Activated CD4-positive, alpha-beta T cell treated with anti-CD3 and anti-CD28 coated beads, Interleukin-2, amount 10 ng/mL, durations not matched to agents 7 days and 5 days (primary cell): ENCODE measurements at regions of chr2 and their contacts with region 1.

Region 1: DNA sequence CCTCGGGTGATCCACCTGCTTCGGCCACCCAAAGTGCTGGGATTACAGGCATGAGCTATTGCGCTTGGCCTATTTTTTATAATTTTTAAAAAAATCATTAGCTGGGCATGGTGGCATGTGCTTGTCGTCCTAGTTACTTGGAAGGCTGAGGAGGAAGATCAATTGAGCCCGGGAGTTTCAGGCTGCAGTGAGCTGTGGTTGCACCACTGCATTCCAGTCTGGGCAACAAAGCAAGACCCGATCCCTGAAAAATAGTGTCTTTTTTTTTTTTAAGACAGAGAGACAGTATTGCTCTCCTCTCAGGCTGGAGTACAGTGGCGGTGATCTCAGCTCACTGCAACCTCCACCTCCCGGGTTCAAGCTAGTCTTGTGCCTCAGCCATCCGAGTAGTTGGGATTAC is 4.8 kb downstream of the SSB start:
- DNase-seq: no peak
- H3K4me3 Mint-ChIP-seq: no peak overlapping the region
- H3K27ac Mint-ChIP-seq: no peak overlapping the region
- H3K4me1 Mint-ChIP-seq: peaks cover 29% of the 10 kb centered on the region
- H3K27me3 Mint-ChIP-seq: no peaks in the 10 kb centered on the region

Region 2: GRCh38 chr2:169815849-169816248 is 12.4 kb after region 1 on chr2:
- CTCF ChIA-PET with region 1: interaction called, 10 read pairs
- POLR2A ChIA-PET with region 1: no interaction called
- DNase-seq: no peak
- H3K4me3 Mint-ChIP-seq: no peak overlapping the region
- H3K27ac Mint-ChIP-seq: no peak overlapping the region
- H3K4me1 Mint-ChIP-seq: peaks cover 8% of the 10 kb centered on the region
- H3K27me3 Mint-ChIP-seq: no peaks in the 10 kb centered on the region